Activated naive CD4-positive, alpha-beta T cell treated with anti-CD3 and anti-CD28 coated beads for 36 hours (primary cell): ENCODE measurements at regions of chr3 and their contacts with region 1.

Region 1: DNA sequence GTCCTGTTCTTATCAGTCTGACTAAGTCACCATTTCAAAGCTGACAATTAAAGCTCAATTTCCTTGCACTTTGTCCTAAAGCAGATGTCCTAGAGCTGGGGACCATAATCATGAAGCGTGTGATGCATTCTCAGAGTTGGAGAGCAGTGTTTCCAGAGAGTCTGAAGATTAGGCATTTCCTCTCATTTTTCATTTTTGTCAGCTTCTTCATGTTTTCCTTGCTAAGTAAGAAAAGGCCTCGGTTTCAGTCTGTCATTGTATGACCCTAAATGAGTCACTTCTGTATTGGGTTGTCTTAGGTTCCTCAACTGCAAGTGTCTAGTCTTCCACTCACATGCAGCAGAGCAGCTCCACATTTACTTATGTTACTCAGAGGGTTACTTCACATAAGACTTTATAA is 257.2 kb upstream of the TPRG1 start:
- DNase-seq: peak; percentile 36
- H3K4me3 Mint-ChIP-seq: no peak overlapping the region
- H3K27ac Mint-ChIP-seq: peak overlapping the region; percentile 85
- H3K4me1 Mint-ChIP-seq: peaks cover 47% of the 10 kb centered on the region
- H3K27me3 Mint-ChIP-seq: peaks cover 2% of the 10 kb centered on the region

Region 2: GRCh38 chr3:187919048-187919447 is 995.5 kb before region 1 on chr3:
- CTCF ChIA-PET with region 1: no interaction called
- intact Hi-C with region 1: loop called (anchors 1 kb)
- DNase-seq: peak; percentile 77
- H3K4me3 Mint-ChIP-seq: peak overlapping the region; percentile 60
- H3K27ac Mint-ChIP-seq: peak overlapping the region; percentile 94
- H3K4me1 Mint-ChIP-seq: peaks cover 83% of the 10 kb centered on the region
- H3K27me3 Mint-ChIP-seq: no peaks in the 10 kb centered on the region

Region 3: GRCh38 chr3:188294823-188295487 is 619.6 kb before region 1 on chr3:
- CTCF ChIA-PET with region 1: no interaction called
- intact Hi-C with region 1: loop called (anchors 2 kb)
- DNase-seq: peak; percentile 49
- H3K4me3 Mint-ChIP-seq: no peak overlapping the region
- H3K27ac Mint-ChIP-seq: peak overlapping the region; percentile 69
- H3K4me1 Mint-ChIP-seq: peaks cover 85% of the 10 kb centered on the region
- H3K27me3 Mint-ChIP-seq: no peaks in the 10 kb centered on the region

Region 4: DNA sequence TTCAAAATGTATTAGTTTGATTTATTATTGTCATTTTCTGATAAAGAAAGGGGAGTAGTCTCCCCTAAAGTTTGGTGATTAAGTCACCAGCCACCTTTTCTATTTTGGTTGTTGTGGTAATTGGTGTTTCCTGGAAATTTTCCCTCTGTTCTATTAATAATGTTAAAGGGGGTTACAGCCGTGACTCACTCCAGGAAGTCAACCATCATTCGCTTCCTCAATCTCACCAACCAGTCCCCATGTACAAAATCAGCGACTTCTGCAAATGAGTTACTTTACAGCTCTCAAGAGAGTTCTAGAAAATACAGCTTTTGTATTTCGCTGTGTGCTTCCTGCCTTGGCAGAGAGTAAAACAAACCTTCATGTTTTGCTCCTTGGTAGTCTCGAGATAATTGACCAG is 475.5 kb before region 1 on chr3:
- CTCF ChIA-PET with region 1: no interaction called
- intact Hi-C with region 1: loop called (anchors 1 kb)
- DNase-seq: peak; percentile 51
- H3K4me3 Mint-ChIP-seq: no peak overlapping the region
- H3K27ac Mint-ChIP-seq: peak overlapping the region; percentile 61
- H3K4me1 Mint-ChIP-seq: peaks cover 38% of the 10 kb centered on the region
- H3K27me3 Mint-ChIP-seq: no peaks in the 10 kb centered on the region

Region 5: DNA sequence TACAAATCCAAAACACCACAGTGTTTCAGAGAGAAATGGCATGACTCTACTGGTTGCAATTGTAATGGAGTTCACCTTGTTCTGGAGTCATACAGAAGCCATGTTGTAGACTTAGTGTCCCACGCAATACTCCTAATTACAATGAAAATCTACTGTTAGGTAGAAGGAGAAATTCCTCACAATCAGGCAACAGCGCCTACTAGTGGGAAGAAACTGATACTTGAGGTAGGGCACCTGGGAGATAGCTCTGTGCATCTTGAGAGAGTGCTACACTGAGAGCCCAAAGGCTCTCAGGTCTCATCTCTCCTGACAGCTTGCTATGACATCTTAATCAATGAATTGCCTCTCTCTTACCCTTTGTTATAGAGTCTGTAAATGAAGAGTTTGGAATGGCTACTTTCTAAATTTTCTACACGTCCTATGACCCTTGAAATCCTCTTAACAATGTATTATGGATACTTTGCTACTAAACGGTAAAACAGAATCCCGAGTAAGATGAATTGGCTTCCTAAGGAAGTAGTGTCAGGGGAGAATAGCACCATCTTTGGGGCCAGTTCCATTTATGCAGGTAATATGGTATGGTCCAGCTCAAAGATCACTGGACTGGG is 165.4 kb before region 1 on chr3:
- CTCF ChIA-PET with region 1: no interaction called
- intact Hi-C with region 1: loop called (anchors 1 kb)
- DNase-seq: peak; percentile 66
- H3K4me3 Mint-ChIP-seq: no peak overlapping the region
- H3K27ac Mint-ChIP-seq: no peak overlapping the region
- H3K4me1 Mint-ChIP-seq: peaks cover 29% of the 10 kb centered on the region
- H3K27me3 Mint-ChIP-seq: no peaks in the 10 kb centered on the region

Region 6: GRCh38 chr3:188769831-188770230 is 144.7 kb before region 1 on chr3:
- CTCF ChIA-PET with region 1: no interaction called
- intact Hi-C with region 1: no loop called
- DNase-seq: no peak
- H3K4me3 Mint-ChIP-seq: no peak overlapping the region
- H3K27ac Mint-ChIP-seq: no peak overlapping the region
- H3K4me1 Mint-ChIP-seq: no peaks in the 10 kb centered on the region
- H3K27me3 Mint-ChIP-seq: no peaks in the 10 kb centered on the region

Region 7: GRCh38 chr3:188842639-188843038 is 71.9 kb before region 1 on chr3:
- CTCF ChIA-PET with region 1: no interaction called
- intact Hi-C with region 1: no loop called
- DNase-seq: no peak
- H3K4me3 Mint-ChIP-seq: no peak overlapping the region
- H3K27ac Mint-ChIP-seq: no peak overlapping the region
- H3K4me1 Mint-ChIP-seq: no peaks in the 10 kb centered on the region
- H3K27me3 Mint-ChIP-seq: no peaks in the 10 kb centered on the region

Region 8: GRCh38 chr3:188890572-188891270 is 23.8 kb before region 1 on chr3:
- CTCF ChIA-PET with region 1: no interaction called
- intact Hi-C with region 1: no loop called
- DNase-seq: no peak
- H3K4me3 Mint-ChIP-seq: no peak overlapping the region
- H3K27ac Mint-ChIP-seq: no peak overlapping the region
- H3K4me1 Mint-ChIP-seq: peaks cover 5% of the 10 kb centered on the region
- H3K27me3 Mint-ChIP-seq: no peaks in the 10 kb centered on the region

Region 9: GRCh38 chr3:189288348-189289235 is 374.0 kb after region 1 on chr3:
- CTCF ChIA-PET with region 1: no interaction called
- intact Hi-C with region 1: loop called (anchors 5 kb)
- DNase-seq: no peak
- H3K4me3 Mint-ChIP-seq: no peak overlapping the region
- H3K27ac Mint-ChIP-seq: peak overlapping the region; percentile 46
- H3K4me1 Mint-ChIP-seq: peaks cover 34% of the 10 kb centered on the region
- H3K27me3 Mint-ChIP-seq: no peaks in the 10 kb centered on the region